ENCODE measurements at regions of chr11 and their contacts with region 1.

Region 1: GRCh38 chr11:19071255-19071654 is 10.7 kb upstream of the MRGPRX2 start:
- DNase-seq: peak; percentile 81 to 88 (median 86)
- ATAC-seq: peak; percentile 96
- H3K4me3 ChIP-seq: no peak overlapping the region
- H3K27ac ChIP-seq: no peak overlapping the region
- H3K4me1 ChIP-seq: no peaks in the 10 kb centered on the region; a peak in 1 of 5 replicates
- H3K27me3 ChIP-seq: no peaks in the 10 kb centered on the region
- CTCF ChIP-seq: peak; percentile 99 to 100 (median 99)
- EP300 ChIP-seq: no peak
- POLR2A ChIP-seq: no peak
- RAD21 ChIP-seq: peak; percentile 95 to 98

Region 2: DNA sequence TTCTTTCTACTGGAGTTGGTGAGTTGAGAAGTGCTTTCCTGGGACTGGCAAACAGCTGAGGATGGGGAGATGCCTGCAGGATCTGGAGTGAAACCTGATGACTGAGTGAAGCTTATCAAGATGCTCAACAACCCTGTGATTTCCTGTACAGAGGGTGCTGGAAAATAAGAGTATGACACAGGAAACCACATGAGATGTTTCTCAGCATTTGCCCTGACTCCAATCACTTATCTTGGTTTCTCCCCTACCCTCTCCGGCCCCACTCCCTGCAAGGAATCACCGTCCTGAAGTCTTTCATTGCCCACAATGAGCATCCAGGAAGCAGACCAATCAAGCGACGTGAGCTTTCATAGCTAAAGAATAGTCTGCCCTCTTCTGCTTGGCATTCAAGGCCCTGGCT is 10.6 kb before region 1 on chr11 and contains the start of gene MRGPRX2:
- CTCF ChIA-PET with region 1: no interaction called
- POLR2A ChIA-PET with region 1: no interaction called
- in situ Hi-C with region 1: no loop called
- intact Hi-C with region 1: no loop called
- DNase-seq: no peak
- ATAC-seq: no peak
- H3K4me3 ChIP-seq: no peak within 1 kb of the TSS
- H3K27ac ChIP-seq: no peak within 1 kb of the TSS
- H3K4me1 ChIP-seq: peaks cover 0 to 3% of the 10 kb centered on the region in 2 experiments; a peak in 1 of 5 replicates
- H3K27me3 ChIP-seq: peaks cover 0 to 7% of the 10 kb centered on the region in 2 experiments; a peak in 2 of 5 replicates
- CTCF ChIP-seq: no peak
- EP300 ChIP-seq: no peak
- POLR2A ChIP-seq: no peak
- RAD21 ChIP-seq: no peak
- polyA plus RNA-seq, gene MRGPRX2: not detected

Region 3: GRCh38 chr11:19218786-19219460 is 147.7 kb after region 1 on chr11:
- CTCF ChIA-PET with region 1: no interaction called
- POLR2A ChIA-PET with region 1: no interaction called
- in situ Hi-C with region 1: no loop called
- intact Hi-C with region 1: loop called (anchors 10 kb)
- DNase-seq: peak in 2 of 4 experiments; percentile 24 to 31
- ATAC-seq: peak; percentile 82
- H3K4me3 ChIP-seq: no peak overlapping the region
- H3K27ac ChIP-seq: no peak overlapping the region
- H3K4me1 ChIP-seq: peaks cover 0 to 4% of the 10 kb centered on the region in 2 experiments; a peak in 3 of 5 replicates
- H3K27me3 ChIP-seq: peaks cover 23 to 24% of the 10 kb centered on the region in 2 experiments
- CTCF ChIP-seq: no peak
- EP300 ChIP-seq: no peak
- POLR2A ChIP-seq: no peak
- RAD21 ChIP-seq: no peak

Region 4: DNA sequence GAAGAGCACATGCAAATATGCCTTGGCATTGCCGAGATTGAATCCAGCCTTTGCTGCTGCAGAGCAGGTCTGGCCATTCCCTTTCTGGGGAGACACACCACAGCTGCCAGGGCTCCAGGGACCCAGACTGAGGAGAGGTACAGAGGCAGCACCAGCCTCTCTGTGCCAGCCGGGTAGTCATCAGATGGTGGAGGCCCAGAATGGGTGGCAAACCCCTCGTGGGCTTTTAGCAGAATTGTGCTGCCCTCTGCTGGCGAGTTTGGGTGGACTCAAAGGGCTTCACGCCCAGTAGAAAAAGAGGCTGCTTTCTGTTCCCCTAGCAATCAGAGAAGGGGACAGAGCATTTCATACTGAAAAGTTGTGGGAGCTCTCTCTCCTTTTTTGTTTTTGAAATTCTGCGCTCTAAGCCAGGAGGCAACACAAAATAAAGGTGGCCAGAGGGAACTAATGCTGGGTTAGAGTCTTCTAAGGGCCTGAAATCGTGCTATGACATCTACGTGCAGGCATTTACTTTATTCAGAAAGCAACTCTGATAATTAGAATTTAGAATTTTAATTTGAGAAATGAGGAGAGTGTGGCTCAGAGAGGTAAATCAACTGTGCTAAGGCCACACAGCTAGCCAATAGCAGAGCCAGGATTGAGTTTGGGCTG is 482.6 kb after region 1 on chr11:
- CTCF ChIA-PET with region 1: interaction called, 75 read pairs
- POLR2A ChIA-PET with region 1: no interaction called
- in situ Hi-C with region 1: no loop called
- intact Hi-C with region 1: loop called (anchors 1 kb)
- DNase-seq: peak; percentile 55 to 74 (median 64)
- ATAC-seq: peak; percentile 90
- H3K4me3 ChIP-seq: no peak overlapping the region
- H3K27ac ChIP-seq: no peak overlapping the region
- H3K4me1 ChIP-seq: no peaks in the 10 kb centered on the region
- H3K27me3 ChIP-seq: peaks cover 0 to 8% of the 10 kb centered on the region in 2 experiments; a peak in 2 of 5 replicates
- CTCF ChIP-seq: peak; percentile 84 to 89 (median 85)
- EP300 ChIP-seq: no peak
- POLR2A ChIP-seq: no peak
- RAD21 ChIP-seq: peak; percentile 91 to 94

Region 5: DNA sequence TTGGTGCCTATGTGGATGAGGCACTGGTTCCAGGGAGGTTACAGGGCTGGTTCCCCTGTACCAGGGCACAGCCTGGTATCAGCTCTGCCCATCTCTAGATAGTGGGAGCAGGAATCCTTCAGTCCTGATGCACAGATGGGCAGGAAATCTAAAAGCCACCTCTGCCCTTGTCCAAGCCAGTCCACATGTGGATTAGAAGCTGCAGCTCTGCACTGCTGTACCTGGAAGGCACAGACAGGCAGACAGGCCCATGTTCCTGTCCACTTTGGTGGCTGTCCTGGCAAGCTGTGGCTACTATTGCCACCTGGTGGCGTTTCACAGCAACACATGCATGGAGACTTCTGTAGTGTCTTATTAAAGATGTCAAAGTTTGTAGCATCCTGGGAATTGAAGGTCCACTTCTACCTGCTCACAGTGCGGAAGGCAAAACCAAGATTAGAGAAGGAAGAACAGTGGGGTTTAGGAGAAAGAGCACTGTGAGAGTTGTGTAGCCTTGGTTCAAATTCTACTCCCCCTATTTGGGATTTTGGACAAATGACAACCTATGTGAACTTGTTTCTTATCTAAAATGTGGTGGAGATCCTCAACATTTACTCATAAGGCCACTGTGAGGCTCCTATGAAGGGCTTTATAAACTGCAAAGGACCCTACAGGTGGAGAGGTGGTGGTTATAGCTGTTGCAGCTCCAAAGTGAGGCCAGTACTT is 671.5 kb after region 1 on chr11:
- CTCF ChIA-PET with region 1: interaction called, 6 read pairs
- POLR2A ChIA-PET with region 1: no interaction called
- in situ Hi-C with region 1: no loop called
- intact Hi-C with region 1: loop called (anchors 1 kb)
- DNase-seq: peak; percentile 41 to 71 (median 48)
- ATAC-seq: peak; percentile 94
- H3K4me3 ChIP-seq: no peak overlapping the region
- H3K27ac ChIP-seq: no peak overlapping the region
- H3K4me1 ChIP-seq: no peaks in the 10 kb centered on the region
- H3K27me3 ChIP-seq: peaks cover 0 to 14% of the 10 kb centered on the region in 2 experiments; a peak in 1 of 5 replicates
- CTCF ChIP-seq: peak; percentile 78 to 82 (median 81)
- EP300 ChIP-seq: no peak
- POLR2A ChIP-seq: no peak
- RAD21 ChIP-seq: peak; percentile 94 to 95

Region 6: GRCh38 chr11:19903620-19904069 is 832.4 kb after region 1 on chr11:
- CTCF ChIA-PET with region 1: interaction called, 8 read pairs
- POLR2A ChIA-PET with region 1: no interaction called
- in situ Hi-C with region 1: loop called (anchors 10 kb)
- intact Hi-C with region 1: loop called (anchors 2 kb)
- DNase-seq: peak; percentile 55 to 77 (median 68)
- ATAC-seq: peak; percentile 94
- H3K4me3 ChIP-seq: no peak overlapping the region
- H3K27ac ChIP-seq: no peak overlapping the region
- H3K4me1 ChIP-seq: no peaks in the 10 kb centered on the region
- H3K27me3 ChIP-seq: peaks cover 0 to 5% of the 10 kb centered on the region in 2 experiments; a peak in 1 of 5 replicates
- CTCF ChIP-seq: peak; percentile 71 to 86 (median 79)
- EP300 ChIP-seq: no peak
- POLR2A ChIP-seq: no peak
- RAD21 ChIP-seq: peak; percentile 58 to 75